Activated CD8-positive, alpha-beta T cell treated with anti-CD3 and anti-CD28 coated beads, Interleukin-2, amount 10 ng/mL, durations not matched to agents 7 days and 5 days (primary cell): ENCODE measurements at regions of chr10 and their contacts with region 1.

Region 1: DNA sequence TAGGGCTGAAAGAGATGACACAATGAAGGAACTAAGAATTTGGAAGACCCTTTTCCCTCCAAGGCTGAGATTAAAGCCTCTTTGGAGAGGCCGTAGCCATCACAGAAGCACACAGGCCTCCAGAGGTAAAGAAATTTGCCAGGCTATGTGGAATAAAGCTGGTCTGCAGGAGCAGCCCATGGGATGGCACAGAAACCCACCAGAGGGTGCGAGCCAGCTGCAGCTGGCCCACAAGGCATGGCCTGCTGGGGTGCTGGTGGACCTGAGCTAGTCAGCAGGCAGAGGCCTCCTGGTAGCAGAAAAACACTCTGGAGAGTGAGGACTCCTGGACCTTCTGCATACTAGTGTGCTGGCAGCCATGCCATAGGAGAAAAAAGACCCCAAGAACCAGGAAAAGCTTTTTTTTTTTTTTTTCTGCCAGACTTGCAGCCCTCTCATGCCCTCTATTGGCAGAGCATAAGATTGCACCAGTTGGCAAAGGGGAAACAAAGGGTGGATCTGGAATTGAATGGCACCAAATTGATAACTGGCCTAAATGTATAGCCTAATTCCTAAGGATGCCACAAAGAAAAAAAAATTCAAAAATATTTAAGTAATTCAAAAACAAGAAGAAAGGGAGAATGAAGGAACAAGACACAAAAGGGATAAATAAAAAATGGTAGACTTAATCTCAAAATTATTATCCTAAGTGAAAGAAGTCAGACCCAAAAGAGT is 112.6 kb upstream of the GHITM start:
- DNase-seq: peak; percentile 33
- ATAC-seq: no peak
- H3K4me3 Mint-ChIP-seq: no peak overlapping the region
- H3K27ac Mint-ChIP-seq: no peak overlapping the region
- H3K4me1 Mint-ChIP-seq: no peaks in the 10 kb centered on the region
- H3K27me3 Mint-ChIP-seq: no peaks in the 10 kb centered on the region

Region 2: GRCh38 chr10:84038035-84038434 is 11.3 kb after region 1 on chr10:
- CTCF ChIA-PET with region 1: interaction called, 11 read pairs
- POLR2A ChIA-PET with region 1: no interaction called
- DNase-seq: no peak
- ATAC-seq: no peak
- H3K4me3 Mint-ChIP-seq: no peak overlapping the region
- H3K27ac Mint-ChIP-seq: no peak overlapping the region
- H3K4me1 Mint-ChIP-seq: no peaks in the 10 kb centered on the region
- H3K27me3 Mint-ChIP-seq: peaks cover 4% of the 10 kb centered on the region